Mammary epithelial cell (primary cell): ENCODE measurements at regions of chr4 and their contacts with region 1.

Region 1: DNA sequence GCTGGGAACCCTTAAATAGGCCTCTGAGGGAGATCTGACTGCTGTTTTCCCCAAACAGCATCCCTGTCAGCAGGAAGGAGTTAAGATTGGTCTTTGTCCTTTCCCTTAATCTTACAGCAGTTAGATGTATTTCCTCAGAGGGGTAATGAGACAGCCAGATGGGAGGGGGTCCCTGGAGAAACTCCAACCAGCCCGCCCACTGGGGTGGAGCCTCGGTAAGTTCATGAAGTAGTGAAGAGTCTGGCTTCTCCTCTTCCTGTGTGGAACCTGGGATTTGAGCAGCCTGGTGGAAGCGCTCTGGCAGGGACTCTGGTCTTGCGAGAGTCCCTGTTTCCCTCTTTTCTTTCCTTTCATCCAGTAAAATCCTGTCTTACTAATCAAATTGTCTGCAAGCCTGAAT is 330.0 kb downstream of the TLL1 start:
- DNase-seq: no peak
- H3K4me3 ChIP-seq: no peak overlapping the region
- H3K27ac ChIP-seq: no peak overlapping the region
- H3K4me1 ChIP-seq: no peaks in the 10 kb centered on the region
- H3K27me3 ChIP-seq: peaks cover 2% of the 10 kb centered on the region
- CTCF ChIP-seq: no peak

Region 2: DNA sequence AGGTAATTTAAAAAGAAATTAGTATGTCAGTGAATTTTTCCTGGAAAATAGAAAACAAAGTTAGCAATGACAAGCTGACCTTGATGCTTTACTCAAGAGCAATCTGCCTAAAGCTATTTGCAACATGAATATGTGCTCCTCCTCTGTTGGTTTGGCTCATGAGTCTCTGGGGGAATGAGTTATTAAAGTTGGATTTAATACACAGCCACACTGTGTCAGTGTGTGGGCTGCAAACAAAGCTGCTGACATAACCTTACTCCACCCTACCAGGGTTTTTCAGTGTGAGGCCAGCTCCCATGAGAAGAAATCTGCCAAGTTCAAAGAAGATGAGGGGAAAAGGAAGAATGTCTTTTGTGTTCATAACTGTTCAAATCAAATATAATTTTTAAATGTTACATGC is 49.4 kb before region 1 on chr4:
- CTCF ChIA-PET with region 1: no interaction called
- dilution Hi-C with region 1: loop called (anchors 5 kb)
- in situ Hi-C with region 1: no loop called
- intact Hi-C with region 1: no loop called
- DNase-seq: no peak
- H3K4me3 ChIP-seq: no peak overlapping the region
- H3K27ac ChIP-seq: no peak overlapping the region
- H3K4me1 ChIP-seq: no peaks in the 10 kb centered on the region
- H3K27me3 ChIP-seq: peaks cover 2% of the 10 kb centered on the region
- CTCF ChIP-seq: no peak